HEK293T (cell line): ENCODE measurements at regions of chr15 and their contacts with region 1.

Region 1: GRCh38 chr15:78308422-78309032 is 9.1 kb upstream of the SKIC8 start:
- DNase-seq: peak; percentile 90

Region 2: GRCh38 chr15:78415286-78415685 is 106.8 kb after region 1 on chr15:
- CTCF ChIA-PET with region 1: interaction called, 17 read pairs
- POLR2A ChIA-PET with region 1: no interaction called
- DNase-seq: peak; percentile 54

Region 3: DNA sequence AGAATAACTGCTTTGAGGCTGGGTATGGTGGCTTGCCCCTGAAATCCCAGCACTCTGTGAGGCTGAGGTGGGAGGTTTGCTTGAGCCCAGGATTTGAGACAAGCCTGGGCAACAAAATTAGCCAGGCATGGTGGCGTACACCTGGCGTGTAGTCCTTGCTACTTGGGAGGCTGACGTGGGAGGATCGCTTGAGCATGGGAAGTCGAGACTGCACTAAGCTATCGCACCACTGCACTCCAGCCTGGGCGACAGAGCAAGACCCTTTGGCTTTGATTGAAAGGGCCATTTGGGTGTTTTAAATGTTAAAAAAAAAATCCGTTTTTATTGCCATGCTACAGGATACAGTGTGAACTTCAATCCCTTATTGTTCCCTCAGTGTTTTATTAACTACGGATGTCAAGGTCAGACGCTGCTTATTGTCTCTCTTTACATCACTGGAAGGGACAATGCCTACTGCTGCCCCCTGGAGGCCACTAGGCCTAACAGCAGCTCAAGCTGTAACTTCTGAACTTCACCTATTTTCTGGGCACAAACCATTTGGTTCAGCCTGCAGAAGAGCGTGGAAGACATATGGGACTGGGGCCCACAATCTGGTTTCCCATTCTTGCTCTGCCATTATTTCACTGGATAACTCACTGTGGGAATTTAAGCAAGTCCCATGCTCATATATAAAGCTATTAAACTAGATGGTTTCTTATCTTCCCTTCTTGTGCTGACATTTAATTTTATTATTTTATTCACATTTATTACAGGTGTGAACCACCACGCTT is 114.2 kb after region 1 on chr15:
- CTCF ChIA-PET with region 1: interaction called, 17 read pairs
- POLR2A ChIA-PET with region 1: no interaction called
- DNase-seq: peak; percentile 81